ENCODE measurements at regions of chr20 and their contacts with region 1.

Region 1: GRCh38 chr20:35954200-35954906 is at the start of gene SCAND1:
- DNase-seq: peak; percentile 98
- H3K4me3 Mint-ChIP-seq: peak within 1 kb of the TSS; percentile 99
- H3K27ac Mint-ChIP-seq: peak within 1 kb of the TSS; percentile 98
- H3K4me1 Mint-ChIP-seq: peaks cover 16% of the 10 kb centered on the region
- H3K27me3 Mint-ChIP-seq: no peaks in the 10 kb centered on the region
- total RNA-seq, gene SCAND1: 41.9 to 43.1 TPM

Region 2: GRCh38 chr20:35601008-35601973 is 353.1 kb before region 1 on chr20:
- CTCF ChIA-PET with region 1: interaction called, 4 read pairs
- intact Hi-C with region 1: loop called (anchors 5 kb)
- DNase-seq: peak; percentile 91
- H3K4me3 Mint-ChIP-seq: peak overlapping the region; percentile 64
- H3K27ac Mint-ChIP-seq: no peak overlapping the region
- H3K4me1 Mint-ChIP-seq: peaks cover 7% of the 10 kb centered on the region
- H3K27me3 Mint-ChIP-seq: peaks cover 13% of the 10 kb centered on the region

Region 3: DNA sequence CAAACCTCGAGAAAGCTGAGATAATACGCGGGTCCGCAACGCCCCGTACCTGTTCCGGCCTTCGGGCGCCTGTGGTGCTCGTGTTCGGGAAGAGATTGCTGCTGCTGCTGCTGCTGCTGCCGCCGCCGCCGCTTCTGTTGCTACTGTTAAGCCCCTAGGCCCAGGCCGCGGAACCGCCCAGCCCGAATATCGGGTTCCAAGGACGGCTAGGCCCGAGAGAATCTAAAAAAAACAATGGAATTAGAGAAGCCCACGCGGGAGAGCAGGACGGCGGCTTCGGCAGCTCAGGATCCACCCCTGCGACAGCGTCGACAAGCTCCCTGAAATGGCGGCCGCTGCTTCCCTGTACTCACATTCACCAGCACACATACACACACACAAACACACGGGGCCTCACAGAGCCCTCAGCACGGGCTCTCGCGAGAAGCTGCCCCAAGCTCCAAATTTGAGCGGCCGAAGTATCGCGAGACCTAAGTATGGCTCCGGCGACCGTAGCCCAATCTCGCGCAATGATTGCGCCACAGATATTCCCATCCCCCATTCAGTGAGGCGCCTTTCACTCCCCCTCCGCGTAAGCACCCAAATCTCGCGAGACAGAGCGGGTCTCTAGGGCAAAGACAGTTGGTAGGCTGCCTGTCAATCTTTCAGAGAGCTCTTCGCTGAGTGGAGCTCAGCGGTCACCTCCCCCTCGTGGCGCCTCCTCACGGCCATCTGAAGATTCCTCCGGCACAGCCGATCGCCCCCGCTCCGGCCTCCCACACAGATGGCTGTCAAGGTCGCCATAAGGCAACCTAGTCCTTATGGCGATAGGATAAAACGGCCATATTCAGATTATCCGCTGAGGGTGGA is 212.2 kb before region 1 on chr20 and contains the start of gene RBM39:
- CTCF ChIA-PET with region 1: interaction called, 10 read pairs
- intact Hi-C with region 1: loop called (anchors 1 kb)
- DNase-seq: peak; percentile 100
- H3K4me3 Mint-ChIP-seq: peak within 1 kb of the TSS; percentile 99
- H3K27ac Mint-ChIP-seq: peak within 1 kb of the TSS; percentile 100
- H3K4me1 Mint-ChIP-seq: peaks cover 38% of the 10 kb centered on the region
- H3K27me3 Mint-ChIP-seq: no peaks in the 10 kb centered on the region
- total RNA-seq, gene RBM39: 297 to 304 TPM

Region 4: GRCh38 chr20:35994994-35995453 is 40.7 kb after region 1 on chr20:
- CTCF ChIA-PET with region 1: interaction called, 21 read pairs
- intact Hi-C with region 1: no loop called
- DNase-seq: peak; percentile 89
- H3K4me3 Mint-ChIP-seq: no peak overlapping the region
- H3K27ac Mint-ChIP-seq: no peak overlapping the region
- H3K4me1 Mint-ChIP-seq: peaks cover 2% of the 10 kb centered on the region
- H3K27me3 Mint-ChIP-seq: no peaks in the 10 kb centered on the region

Region 5: DNA sequence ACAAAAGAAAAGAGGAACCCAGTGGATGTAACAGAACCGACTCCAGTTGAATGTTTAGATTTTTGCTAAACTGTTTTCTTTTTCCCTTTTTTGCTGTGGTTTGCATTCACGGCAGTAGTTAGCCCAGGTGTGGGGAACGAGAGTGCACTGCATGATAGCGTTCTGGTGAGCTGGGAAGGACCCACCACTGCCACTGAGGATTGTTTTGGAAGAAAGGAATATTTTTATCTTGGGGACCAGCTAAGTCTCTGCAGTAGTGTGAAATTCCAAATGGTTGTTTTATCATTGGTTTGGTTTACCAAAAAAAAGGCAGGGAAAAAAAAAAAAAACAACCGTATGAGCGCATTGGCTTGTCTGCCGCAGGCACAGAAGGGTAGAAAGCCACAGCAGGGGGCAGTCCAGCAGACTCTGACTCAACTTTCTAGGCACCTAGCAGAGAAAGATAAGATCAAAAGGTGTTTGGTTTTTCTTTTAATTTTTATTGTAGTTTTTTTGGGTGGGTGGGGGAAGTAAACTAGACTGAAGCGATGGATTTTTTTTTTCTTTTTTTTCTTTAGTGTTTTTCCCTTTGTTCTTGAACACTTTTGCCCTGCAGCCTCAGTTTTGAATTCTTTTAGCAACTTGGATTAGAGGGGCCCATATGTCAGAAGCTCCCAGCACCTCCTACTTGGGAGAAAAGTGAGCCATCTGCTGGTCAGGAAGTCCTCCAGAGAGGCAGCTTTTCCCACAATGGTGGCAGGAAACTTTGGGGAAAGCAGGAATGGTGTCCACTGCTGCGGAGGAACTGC is 637.7 kb after region 1 on chr20:
- CTCF ChIA-PET with region 1: no interaction called
- intact Hi-C with region 1: loop called (anchors 5 kb)
- DNase-seq: peak; percentile 76
- H3K4me3 Mint-ChIP-seq: no peak overlapping the region
- H3K27ac Mint-ChIP-seq: peak overlapping the region; percentile 75
- H3K4me1 Mint-ChIP-seq: peaks cover 56% of the 10 kb centered on the region
- H3K27me3 Mint-ChIP-seq: no peaks in the 10 kb centered on the region

Measured in activated naive CD4-positive, alpha-beta T cell treated with anti-CD3 and anti-CD28 coated beads for 36 hours (primary cell).